ENCODE measurements at regions of chr17 and their contacts with region 1.

Region 1: DNA sequence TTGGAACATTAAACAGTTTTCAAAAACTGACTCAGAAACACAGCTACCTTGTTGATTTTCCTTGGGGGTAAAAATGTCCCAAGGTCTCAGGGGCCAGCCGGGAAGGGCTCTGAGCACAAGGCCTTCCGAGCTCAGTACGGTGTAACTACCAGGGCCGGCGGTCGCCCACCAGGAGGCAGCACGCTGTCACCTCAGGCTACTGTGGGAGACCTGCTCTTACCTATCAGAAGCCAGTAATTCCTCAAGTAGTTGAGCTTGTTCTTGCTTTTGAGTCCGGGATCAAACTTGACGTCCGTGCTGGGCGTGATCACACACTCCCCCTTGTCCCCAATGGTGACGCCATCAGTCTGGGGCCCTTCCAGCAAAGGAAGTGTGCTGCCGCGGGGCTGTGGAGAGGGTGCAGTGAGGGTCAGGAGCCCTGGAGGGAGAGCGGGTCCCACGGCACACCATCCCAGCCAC is 43.4 kb upstream of the ICAM2 start:
- DNase-seq: no peak
- H3K4me3 Mint-ChIP-seq: no peak overlapping the region
- H3K27ac Mint-ChIP-seq: peak overlapping the region; percentile 30
- H3K4me1 Mint-ChIP-seq: peaks cover 80% of the 10 kb centered on the region
- H3K27me3 Mint-ChIP-seq: no peaks in the 10 kb centered on the region

Region 2: GRCh38 chr17:64051153-64051552 is 12.6 kb before region 1 on chr17:
- intact Hi-C with region 1: loop called (anchors 1 kb)
- DNase-seq: peak; percentile 40
- H3K4me3 Mint-ChIP-seq: peak overlapping the region; percentile 45
- H3K27ac Mint-ChIP-seq: peak overlapping the region; percentile 91
- H3K4me1 Mint-ChIP-seq: peaks cover 35% of the 10 kb centered on the region
- H3K27me3 Mint-ChIP-seq: no peaks in the 10 kb centered on the region

Region 3: DNA sequence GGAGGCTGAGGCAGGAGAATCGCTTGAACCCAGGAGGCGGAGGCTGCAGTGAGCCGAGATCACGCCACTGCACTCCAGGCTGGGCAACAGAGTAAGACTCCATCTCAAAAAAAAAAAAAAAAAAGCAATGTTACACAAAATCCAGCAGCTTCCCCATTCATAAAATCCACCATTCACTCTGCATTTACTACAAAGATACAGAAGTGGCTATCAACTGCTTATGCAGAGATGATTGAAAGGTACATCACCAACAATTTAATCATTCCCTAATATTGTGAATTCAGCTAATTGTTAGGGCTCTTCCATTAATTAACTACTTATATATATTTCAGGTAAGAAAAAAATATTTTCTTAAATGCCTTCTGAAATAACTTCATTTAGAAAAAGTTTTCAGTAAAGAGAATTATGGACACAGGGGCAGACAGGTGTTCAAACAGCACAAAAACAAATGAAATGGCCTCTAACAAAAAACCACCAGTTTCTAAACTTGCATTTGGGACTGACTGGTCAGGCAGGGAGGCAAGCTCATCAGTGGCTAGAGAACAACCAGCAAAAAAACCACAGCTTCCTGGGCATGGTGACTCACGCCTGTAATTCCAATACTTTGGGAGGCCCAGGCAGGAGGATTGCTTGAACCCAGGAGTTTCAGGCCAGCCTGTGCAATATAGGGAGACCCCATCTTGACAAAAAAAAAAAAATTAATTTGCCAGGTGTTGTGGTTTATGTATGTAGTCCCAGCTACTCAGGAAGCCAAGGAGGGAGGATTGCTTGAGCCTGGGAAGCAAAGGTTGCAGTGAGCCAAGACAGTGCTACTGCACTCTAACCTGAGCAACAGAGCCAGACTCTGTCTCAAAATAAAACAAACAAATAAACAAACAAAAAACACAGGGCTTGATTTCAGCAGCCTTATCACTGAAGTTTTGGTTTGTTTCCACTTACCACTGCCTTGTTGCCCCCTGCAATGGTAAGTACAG is 39.9 kb after region 1 on chr17:
- intact Hi-C with region 1: no loop called
- DNase-seq: no peak
- H3K4me3 Mint-ChIP-seq: no peak overlapping the region
- H3K27ac Mint-ChIP-seq: peak overlapping the region; percentile 24
- H3K4me1 Mint-ChIP-seq: peaks cover 62% of the 10 kb centered on the region
- H3K27me3 Mint-ChIP-seq: no peaks in the 10 kb centered on the region

Region 4: GRCh38 chr17:64115871-64116534 is 52.2 kb after region 1 on chr17:
- intact Hi-C with region 1: loop called (anchors 1 kb)
- DNase-seq: peak; percentile 26
- H3K4me3 Mint-ChIP-seq: peak overlapping the region; percentile 50
- H3K27ac Mint-ChIP-seq: peak overlapping the region; percentile 90
- H3K4me1 Mint-ChIP-seq: peaks cover 67% of the 10 kb centered on the region
- H3K27me3 Mint-ChIP-seq: no peaks in the 10 kb centered on the region

Region 5: GRCh38 chr17:64190488-64190887 is 126.7 kb after region 1 on chr17:
- intact Hi-C with region 1: no loop called
- DNase-seq: no peak
- H3K4me3 Mint-ChIP-seq: no peak overlapping the region
- H3K27ac Mint-ChIP-seq: no peak overlapping the region
- H3K4me1 Mint-ChIP-seq: no peaks in the 10 kb centered on the region
- H3K27me3 Mint-ChIP-seq: no peaks in the 10 kb centered on the region

Measured in activated T-helper 2 cell treated with anti-CD3 and anti-CD28 coated beads, Interferon-gamma antibody, Interleukin-2, Interleukin-4, amounts not matched to agents 10 μg/mL and 5 μg/mL and 100 μg/mL, durations not matched to agents 14 hours and 24 hours and 36 hours (primary cell).